Sciatic nerve (tissue), 2 donors: ENCODE measurements at regions of chr1 and their contacts with region 1.

Region 1: DNA sequence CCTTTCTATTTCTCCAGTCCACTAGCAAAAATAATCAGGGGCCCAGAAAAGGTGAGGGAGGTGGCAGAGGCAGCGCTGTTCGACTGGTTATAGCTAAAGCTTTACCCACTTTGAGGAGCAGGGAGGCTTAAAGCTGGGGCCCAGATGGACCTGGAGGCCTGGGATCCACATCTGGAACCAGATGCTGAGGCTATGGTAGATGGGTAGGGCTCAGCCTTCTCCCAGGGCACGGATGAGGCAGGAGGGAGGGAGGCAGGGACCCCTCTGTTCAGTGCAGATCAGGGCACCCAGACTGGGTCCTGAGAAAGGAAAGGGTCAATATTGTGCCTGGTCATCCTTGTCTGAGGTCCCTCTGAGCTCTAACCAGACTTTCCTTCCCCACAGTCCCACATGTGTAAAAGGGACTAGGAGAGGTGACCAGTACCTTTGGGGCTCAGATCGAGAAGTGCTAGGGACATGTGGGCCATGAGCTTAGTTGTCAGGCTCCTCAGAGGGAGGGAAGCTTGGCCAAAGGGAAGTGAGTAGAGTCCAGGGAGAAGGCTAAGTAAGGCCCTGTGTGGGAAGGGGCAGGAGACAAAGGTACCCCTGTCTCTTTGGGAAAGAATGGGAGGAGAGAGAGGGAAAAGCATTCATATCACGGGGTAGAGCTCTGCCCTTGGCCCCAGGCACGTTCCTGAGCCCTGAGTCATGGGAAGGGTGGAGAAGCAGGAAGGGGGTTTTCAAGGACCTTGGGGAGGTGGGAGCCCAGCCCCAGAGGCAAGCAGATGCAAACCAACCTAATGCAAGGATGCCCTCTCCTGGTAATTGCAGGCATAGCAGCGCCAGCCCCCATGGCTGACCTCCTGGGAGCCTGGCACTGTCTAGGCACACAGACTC is 15.4 kb downstream of the LMNA start:
- DNase-seq: peak; percentile 94
- ATAC-seq: peak; percentile 81

Region 2: DNA sequence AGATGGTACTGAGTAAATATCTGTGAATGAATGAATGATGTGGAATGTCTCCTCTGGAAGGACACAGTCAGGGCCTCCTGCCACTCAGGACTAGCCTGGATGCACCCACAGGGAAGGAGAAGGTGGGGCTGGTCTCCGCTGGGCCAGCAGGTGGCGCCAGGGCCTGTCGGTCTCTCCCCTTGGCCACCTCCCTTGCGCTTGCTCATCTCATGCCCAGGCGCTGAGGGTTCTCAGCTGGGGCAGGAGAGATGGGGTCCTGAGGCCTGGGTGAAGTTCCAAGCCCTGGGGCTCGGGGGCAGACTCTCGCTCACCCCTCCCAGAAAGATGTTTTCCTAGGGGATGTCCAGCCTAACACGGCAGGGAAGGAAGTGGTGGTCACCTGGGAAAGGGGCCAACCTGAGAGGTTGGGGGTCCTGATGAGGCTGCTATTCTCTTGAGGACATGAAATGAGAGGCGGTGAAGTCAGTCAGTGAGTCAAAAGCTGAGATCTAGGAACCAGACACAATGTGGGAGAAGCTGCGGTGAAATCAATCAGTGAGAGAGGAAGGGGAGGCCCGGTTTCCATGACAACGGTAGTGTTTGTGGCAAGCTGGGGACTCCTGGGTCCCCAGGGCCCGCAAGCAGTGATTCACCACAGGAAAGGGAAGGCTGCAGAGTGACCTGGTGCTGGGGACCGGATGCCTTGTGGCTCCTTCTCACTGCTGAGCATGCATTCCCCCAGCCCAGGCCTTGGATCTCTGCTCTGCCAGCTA is 33.1 kb before region 1 on chr1:
- intact Hi-C with region 1: loop called (anchors 1 kb)
- DNase-seq: peak; percentile 95
- ATAC-seq: peak; percentile 97